Activated naive CD4-positive, alpha-beta T cell treated with anti-CD3 and anti-CD28 coated beads for 36 hours (primary cell): ENCODE measurements at regions of chr7 and their contacts with region 1.

Region 1: GRCh38 chr7:24979863-24980533 is at the start of gene OSBPL3:
- DNase-seq: peak; percentile 95
- H3K4me3 Mint-ChIP-seq: peak within 1 kb of the TSS; percentile 87
- H3K27ac Mint-ChIP-seq: peak within 1 kb of the TSS; percentile 85
- H3K4me1 Mint-ChIP-seq: peaks cover 47% of the 10 kb centered on the region
- H3K27me3 Mint-ChIP-seq: no peaks in the 10 kb centered on the region
- total RNA-seq, gene OSBPL3: 25.1 to 27.9 TPM

Region 2: DNA sequence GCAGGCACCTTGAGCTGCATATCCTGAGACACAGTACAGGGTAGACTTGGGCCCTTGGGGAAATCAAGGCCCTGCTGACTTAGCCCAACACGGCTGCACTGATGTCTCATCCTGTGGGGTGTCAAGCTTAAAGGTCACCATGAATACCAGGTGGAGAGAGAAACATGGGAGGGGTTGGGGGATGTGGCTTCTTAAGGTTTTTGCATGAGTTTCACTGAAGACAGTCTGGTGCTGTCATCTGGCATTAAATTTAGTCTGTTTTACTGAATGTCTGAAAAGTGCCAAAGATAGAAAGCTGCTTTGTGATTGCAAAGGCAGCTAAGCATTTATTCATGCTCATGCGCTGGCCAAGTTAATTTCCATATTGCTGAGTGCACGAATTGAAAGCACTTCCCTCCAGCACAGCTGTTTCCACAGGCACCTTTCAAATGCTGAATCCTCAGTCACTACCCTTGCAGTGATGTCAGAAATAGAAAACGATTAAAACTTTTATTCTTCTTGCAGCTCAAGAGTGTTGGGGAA is 102.1 kb before region 1 on chr7:
- CTCF ChIA-PET with region 1: interaction called, 6 read pairs
- intact Hi-C with region 1: loop called (anchors 1 kb)
- DNase-seq: peak; percentile 53
- H3K4me3 Mint-ChIP-seq: no peak overlapping the region
- H3K27ac Mint-ChIP-seq: no peak overlapping the region
- H3K4me1 Mint-ChIP-seq: peaks cover 52% of the 10 kb centered on the region
- H3K27me3 Mint-ChIP-seq: no peaks in the 10 kb centered on the region

Region 3: DNA sequence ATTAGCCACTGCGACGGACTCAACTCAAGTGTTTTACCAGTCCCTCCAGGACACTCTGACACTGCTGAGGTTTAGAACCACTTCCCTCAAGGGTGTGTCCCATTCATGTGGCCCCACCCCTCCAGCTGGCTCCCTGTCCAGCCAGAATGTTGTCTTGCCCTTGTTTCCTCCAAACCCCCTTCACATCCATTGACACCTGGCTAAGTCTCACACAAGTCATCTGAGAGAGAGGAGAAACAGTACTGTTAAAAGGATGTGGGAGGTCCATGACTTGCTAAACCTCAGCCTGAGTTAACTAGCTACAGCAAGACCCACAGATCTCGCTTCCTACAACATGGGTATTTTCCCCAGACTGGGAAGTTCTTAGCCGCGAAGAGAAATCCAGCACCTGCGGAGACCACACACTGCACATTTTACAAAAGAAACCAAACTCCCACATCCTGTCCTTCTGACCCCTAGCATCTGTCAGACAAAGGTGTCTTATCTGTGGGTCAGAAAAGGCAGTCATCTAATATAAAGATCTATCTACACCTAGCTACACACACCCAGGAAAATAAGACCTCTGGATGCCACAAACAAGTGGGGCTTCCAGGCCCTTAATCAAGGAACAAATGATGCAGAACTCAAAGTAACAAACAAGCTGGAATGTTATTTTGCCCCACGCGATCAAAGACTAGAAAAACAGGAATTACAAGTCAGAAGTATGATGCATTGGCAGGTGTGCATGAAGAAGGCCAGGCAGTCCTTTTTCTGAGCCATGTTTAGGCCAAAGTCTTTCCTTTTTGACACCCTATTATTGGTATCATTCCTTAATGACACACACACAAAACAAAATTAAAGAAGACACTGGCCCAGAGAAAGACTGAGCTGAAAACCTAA is 13.9 kb before region 1 on chr7:
- CTCF ChIA-PET with region 1: interaction called, 8 read pairs
- intact Hi-C with region 1: loop called (anchors 1 kb)
- DNase-seq: peak; percentile 68
- H3K4me3 Mint-ChIP-seq: peak overlapping the region; percentile 17
- H3K27ac Mint-ChIP-seq: peak overlapping the region; percentile 77
- H3K4me1 Mint-ChIP-seq: peaks cover 77% of the 10 kb centered on the region
- H3K27me3 Mint-ChIP-seq: no peaks in the 10 kb centered on the region

Region 4: GRCh38 chr7:25069900-25070443 is 90.0 kb after region 1 on chr7:
- CTCF ChIA-PET with region 1: interaction called, 22 read pairs
- intact Hi-C with region 1: loop called (anchors 1 kb)
- DNase-seq: peak; percentile 57
- H3K4me3 Mint-ChIP-seq: no peak overlapping the region
- H3K27ac Mint-ChIP-seq: no peak overlapping the region
- H3K4me1 Mint-ChIP-seq: peaks cover 6% of the 10 kb centered on the region
- H3K27me3 Mint-ChIP-seq: no peaks in the 10 kb centered on the region

Region 5: GRCh38 chr7:25098096-25099046 is 118.4 kb after region 1 on chr7:
- CTCF ChIA-PET with region 1: interaction called, 17 read pairs
- intact Hi-C with region 1: loop called (anchors 1 kb)
- DNase-seq: peak; percentile 76
- H3K4me3 Mint-ChIP-seq: no peak overlapping the region
- H3K27ac Mint-ChIP-seq: no peak overlapping the region
- H3K4me1 Mint-ChIP-seq: peaks cover 7% of the 10 kb centered on the region
- H3K27me3 Mint-ChIP-seq: no peaks in the 10 kb centered on the region

Region 6: DNA sequence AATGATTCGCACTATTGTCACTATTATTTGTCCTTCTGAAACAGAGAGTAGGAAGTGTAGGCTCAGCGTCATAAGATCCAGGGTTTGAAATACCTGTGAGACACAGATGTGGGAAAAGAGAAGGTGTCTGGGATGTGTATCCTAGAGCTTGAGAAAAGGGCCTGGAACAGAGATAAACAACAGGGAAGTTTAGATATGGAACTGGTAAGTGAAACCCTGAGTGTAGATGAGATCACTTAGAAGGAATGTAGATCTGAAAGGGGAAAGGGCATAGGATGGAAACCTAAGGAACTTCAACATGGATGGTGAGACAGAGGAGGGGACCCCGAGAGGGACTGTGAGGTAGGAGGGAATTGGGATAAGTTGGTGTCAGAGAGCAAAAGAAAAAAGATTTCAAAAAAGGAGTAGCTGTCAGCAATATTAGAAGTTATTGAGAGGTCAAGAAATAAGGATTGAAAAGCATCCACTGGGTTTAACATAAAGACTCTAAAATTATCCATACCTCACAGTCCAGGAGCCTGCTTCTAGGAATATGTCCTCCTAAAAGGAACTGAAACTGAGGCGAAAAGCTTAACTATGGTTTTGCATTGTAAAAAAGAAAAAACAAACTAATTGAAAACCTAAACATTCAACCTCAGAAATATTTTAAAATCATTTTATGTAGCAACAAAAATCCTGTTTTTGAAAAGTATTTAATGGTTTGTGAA is 367.5 kb after region 1 on chr7:
- CTCF ChIA-PET with region 1: no interaction called
- intact Hi-C with region 1: no loop called
- DNase-seq: no peak
- H3K4me3 Mint-ChIP-seq: no peak overlapping the region
- H3K27ac Mint-ChIP-seq: no peak overlapping the region
- H3K4me1 Mint-ChIP-seq: no peaks in the 10 kb centered on the region
- H3K27me3 Mint-ChIP-seq: peaks cover 4% of the 10 kb centered on the region